ENCODE measurements at regions of chr3 and their contacts with region 1.

Region 1: GRCh38 chr3:157159762-157160657 is at the start of gene CCNL1:
- DNase-seq: peak; percentile 93 to 100 (median 96)
- ATAC-seq: peak; percentile 67
- H3K4me3 ChIP-seq: peak within 1 kb of the TSS; percentile 95
- H3K4me3 Mint-ChIP-seq: peak within 1 kb of the TSS; percentile 95
- H3K27ac ChIP-seq: peak within 1 kb of the TSS; percentile 99 to 100
- H3K27ac Mint-ChIP-seq: peak within 1 kb of the TSS; percentile 100
- H3K4me1 ChIP-seq: peaks cover 22% of the 10 kb centered on the region
- H3K4me1 Mint-ChIP-seq: peaks cover 67% of the 10 kb centered on the region
- H3K27me3 ChIP-seq: no peaks in the 10 kb centered on the region
- H3K27me3 Mint-ChIP-seq: no peaks in the 10 kb centered on the region
- CTCF ChIP-seq: no peak
- total RNA-seq, gene CCNL1: 1,350 to 1,388 TPM

Region 2: GRCh38 chr3:155870133-155870944 is 1289.7 kb before region 1 on chr3 and contains the start of gene GMPS:
- CTCF ChIA-PET with region 1: no interaction called
- POLR2A ChIA-PET with region 1: interaction called, 12 read pairs
- intact Hi-C with region 1: no loop called
- DNase-seq: peak; percentile 87 to 98 (median 95)
- ATAC-seq: peak; percentile 91
- H3K4me3 ChIP-seq: peak within 1 kb of the TSS; percentile 69
- H3K4me3 Mint-ChIP-seq: peak within 1 kb of the TSS; percentile 97
- H3K27ac ChIP-seq: peak within 1 kb of the TSS; percentile 79 to 86
- H3K27ac Mint-ChIP-seq: peak within 1 kb of the TSS; percentile 95
- H3K4me1 ChIP-seq: peaks cover 23% of the 10 kb centered on the region
- H3K4me1 Mint-ChIP-seq: peaks cover 32% of the 10 kb centered on the region
- H3K27me3 ChIP-seq: no peaks in the 10 kb centered on the region
- H3K27me3 Mint-ChIP-seq: no peaks in the 10 kb centered on the region
- CTCF ChIP-seq: peak; percentile 47
- total RNA-seq, gene GMPS: 34.1 to 34.3 TPM

Region 3: DNA sequence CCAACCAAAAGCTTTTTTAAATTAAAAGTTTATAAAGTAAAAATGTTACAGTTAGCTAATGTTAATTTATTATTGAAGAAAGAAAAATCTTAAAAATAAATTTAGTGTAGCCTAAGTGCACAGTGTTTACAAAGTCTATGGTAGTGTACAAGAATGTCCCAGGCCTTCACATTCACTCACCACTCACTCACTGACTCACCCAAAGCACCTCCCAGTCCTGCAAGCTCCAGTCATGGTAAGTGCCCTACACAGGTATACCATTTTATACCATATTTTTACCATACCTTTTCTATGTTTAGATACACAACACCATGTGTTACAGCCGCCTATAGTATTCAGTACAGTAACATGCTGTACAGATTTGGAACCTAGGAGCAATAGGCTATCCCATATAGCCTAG is 634.2 kb before region 1 on chr3:
- CTCF ChIA-PET with region 1: no interaction called
- POLR2A ChIA-PET with region 1: interaction called, 10 read pairs
- intact Hi-C with region 1: no loop called
- DNase-seq: no peak
- ATAC-seq: no peak
- H3K4me3 ChIP-seq: no peak overlapping the region
- H3K4me3 Mint-ChIP-seq: no peak overlapping the region
- H3K27ac ChIP-seq: no peak overlapping the region
- H3K27ac Mint-ChIP-seq: no peak overlapping the region
- H3K4me1 ChIP-seq: peaks cover 11% of the 10 kb centered on the region
- H3K4me1 Mint-ChIP-seq: peaks cover 13% of the 10 kb centered on the region
- H3K27me3 ChIP-seq: no peaks in the 10 kb centered on the region
- H3K27me3 Mint-ChIP-seq: peaks cover 41% of the 10 kb centered on the region
- CTCF ChIP-seq: no peak

Region 4: DNA sequence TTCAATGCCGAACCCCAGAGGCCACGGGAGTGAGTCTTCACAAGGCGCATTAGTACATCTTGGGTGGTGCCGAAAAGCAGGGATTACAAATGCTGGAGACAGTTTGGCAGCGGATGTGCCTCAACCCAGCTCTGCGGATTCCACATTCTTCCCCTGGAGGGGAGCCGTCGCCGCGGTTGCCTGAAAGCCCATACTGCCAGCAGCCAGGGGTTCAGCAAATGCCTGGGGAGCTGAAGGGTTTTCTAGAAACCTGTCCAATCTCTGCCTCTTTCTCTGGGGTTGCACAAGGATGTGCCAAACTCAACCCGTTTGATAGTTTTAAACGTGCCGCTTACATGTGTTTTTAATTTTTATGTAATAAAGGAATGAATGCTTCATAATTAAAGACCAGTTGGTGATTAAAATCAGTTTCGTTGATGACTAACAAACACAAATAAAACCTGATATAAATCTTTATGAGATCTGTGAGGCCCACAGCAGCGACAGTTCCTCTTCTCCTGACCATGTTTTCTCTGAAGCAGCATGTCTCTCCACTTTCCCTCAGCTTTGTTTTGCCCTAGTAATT is 408.5 kb before region 1 on chr3:
- CTCF ChIA-PET with region 1: no interaction called
- POLR2A ChIA-PET with region 1: no interaction called
- intact Hi-C with region 1: no loop called
- DNase-seq: no peak
- ATAC-seq: no peak
- H3K4me3 ChIP-seq: no peak overlapping the region
- H3K4me3 Mint-ChIP-seq: no peak overlapping the region
- H3K27ac ChIP-seq: no peak overlapping the region
- H3K27ac Mint-ChIP-seq: no peak overlapping the region
- H3K4me1 ChIP-seq: no peaks in the 10 kb centered on the region
- H3K4me1 Mint-ChIP-seq: no peaks in the 10 kb centered on the region
- H3K27me3 ChIP-seq: no peaks in the 10 kb centered on the region
- H3K27me3 Mint-ChIP-seq: peaks cover 22% of the 10 kb centered on the region
- CTCF ChIP-seq: no peak

Region 5: DNA sequence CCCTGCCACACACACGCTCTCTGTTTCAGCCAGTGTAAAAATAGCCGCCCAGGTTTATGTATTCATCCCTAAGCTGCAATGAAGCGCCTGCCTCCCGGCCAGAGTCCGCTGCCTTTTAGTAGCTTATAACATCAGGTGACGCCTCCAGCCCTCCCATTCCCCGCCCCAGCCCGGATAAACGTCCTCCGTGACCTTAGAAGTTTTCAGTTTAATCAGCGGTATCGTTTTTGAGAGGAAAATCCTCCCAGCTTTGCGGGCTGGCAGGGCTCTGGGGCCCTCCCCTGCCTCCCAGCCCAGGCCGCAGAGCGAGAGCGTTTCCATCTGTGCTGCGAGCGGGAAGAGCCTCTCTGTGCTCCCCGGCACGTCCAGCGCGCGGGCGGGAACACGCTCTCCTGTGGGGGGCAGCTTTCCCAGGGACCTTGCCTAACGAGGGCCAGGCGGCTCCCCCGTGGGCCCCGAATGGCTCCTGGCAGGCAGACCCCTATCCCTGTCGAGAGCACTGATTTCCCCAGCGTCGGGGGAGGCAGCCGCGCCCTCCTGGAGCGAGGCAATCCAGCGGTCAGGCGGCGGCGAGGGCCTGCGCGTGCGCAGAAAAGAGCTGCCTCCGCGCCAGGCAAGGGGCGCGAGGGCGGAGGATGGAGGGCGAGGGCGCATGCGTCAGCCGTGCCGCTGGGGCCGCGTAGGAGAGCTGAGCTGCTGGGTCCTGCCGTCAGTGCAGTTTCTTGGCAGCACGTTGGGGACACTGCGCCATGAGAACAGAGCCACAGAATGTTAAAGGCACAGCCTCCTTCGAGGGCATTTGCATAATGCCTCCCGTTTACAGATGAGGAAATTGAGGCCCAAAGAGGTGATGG is 71.2 kb before region 1 on chr3:
- CTCF ChIA-PET with region 1: no interaction called
- POLR2A ChIA-PET with region 1: interaction called, 46 read pairs
- intact Hi-C with region 1: no loop called
- DNase-seq: peak; percentile 88 to 97 (median 92)
- ATAC-seq: peak; percentile 83
- H3K4me3 ChIP-seq: peak overlapping the region; percentile 71
- H3K4me3 Mint-ChIP-seq: peak overlapping the region; percentile 90
- H3K27ac ChIP-seq: peak overlapping the region; percentile 92 to 93
- H3K27ac Mint-ChIP-seq: peak overlapping the region; percentile 99
- H3K4me1 ChIP-seq: peaks cover 31% of the 10 kb centered on the region
- H3K4me1 Mint-ChIP-seq: peaks cover 20% of the 10 kb centered on the region
- H3K27me3 ChIP-seq: no peaks in the 10 kb centered on the region
- H3K27me3 Mint-ChIP-seq: no peaks in the 10 kb centered on the region
- CTCF ChIP-seq: peak; percentile 14

Region 6: GRCh38 chr3:157136647-157137387 is 23.2 kb before region 1 on chr3:
- CTCF ChIA-PET with region 1: interaction called, 10 read pairs
- POLR2A ChIA-PET with region 1: interaction called, 11 read pairs
- intact Hi-C with region 1: no loop called
- DNase-seq: no peak
- ATAC-seq: peak; percentile 27
- H3K4me3 ChIP-seq: no peak overlapping the region
- H3K4me3 Mint-ChIP-seq: no peak overlapping the region
- H3K27ac ChIP-seq: no peak overlapping the region
- H3K27ac Mint-ChIP-seq: peak overlapping the region; percentile 74
- H3K4me1 ChIP-seq: peaks cover 47% of the 10 kb centered on the region
- H3K4me1 Mint-ChIP-seq: peaks cover 29% of the 10 kb centered on the region
- H3K27me3 ChIP-seq: no peaks in the 10 kb centered on the region
- H3K27me3 Mint-ChIP-seq: no peaks in the 10 kb centered on the region
- CTCF ChIP-seq: no peak

Region 7: DNA sequence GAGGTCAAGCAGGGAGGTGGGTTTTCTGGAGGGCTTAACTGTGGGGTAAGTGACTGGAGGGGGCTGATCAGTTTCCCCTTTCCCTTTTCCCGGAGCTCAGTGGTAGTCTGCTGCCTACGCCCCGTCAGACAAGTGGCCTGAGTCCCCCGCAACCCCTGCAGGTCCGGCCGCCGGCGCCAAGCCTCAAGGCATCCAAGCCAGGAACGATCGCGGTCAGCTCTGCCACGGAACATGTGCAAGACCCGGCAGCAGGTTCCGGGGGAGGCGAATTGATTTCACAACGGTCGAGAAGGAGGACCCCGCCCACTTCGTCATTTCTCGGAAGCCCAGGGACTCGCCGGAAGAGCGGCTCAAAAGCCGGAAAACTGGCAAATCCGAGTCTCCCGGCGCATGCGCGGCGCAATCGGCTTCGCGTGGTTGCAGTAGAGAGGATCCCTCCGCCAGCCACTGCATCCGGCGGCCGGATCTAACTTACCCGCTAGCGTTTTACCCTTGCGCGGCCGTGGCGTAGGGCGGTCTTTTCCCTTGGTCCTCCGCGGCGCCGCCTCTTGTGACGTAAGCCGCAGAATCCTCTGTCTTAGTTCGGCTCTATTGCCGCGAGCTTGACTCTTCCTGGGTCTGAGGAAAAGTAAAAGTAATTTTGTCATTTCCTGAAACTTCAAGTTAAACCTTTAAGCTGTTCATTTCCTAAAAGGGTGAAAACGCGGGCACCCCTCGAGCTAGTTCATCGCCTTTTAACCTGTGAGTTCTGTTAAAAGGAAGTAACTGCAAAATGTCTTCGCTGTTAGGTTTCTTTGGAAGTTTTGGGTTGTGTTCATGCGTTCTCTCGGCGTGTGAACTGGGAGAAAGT is 14.9 kb after region 1 on chr3:
- CTCF ChIA-PET with region 1: interaction called, 22 read pairs
- POLR2A ChIA-PET with region 1: interaction called, 778 read pairs
- intact Hi-C with region 1: loop called (anchors 1 kb)
- DNase-seq: peak; percentile 93 to 100 (median 98)
- ATAC-seq: peak; percentile 91
- H3K4me3 ChIP-seq: peak overlapping the region; percentile 65
- H3K4me3 Mint-ChIP-seq: peak overlapping the region; percentile 92
- H3K27ac ChIP-seq: peak overlapping the region; percentile 96 to 98
- H3K27ac Mint-ChIP-seq: peak overlapping the region; percentile 98
- H3K4me1 ChIP-seq: peaks cover 18% of the 10 kb centered on the region
- H3K4me1 Mint-ChIP-seq: peaks cover 31% of the 10 kb centered on the region
- H3K27me3 ChIP-seq: no peaks in the 10 kb centered on the region
- H3K27me3 Mint-ChIP-seq: no peaks in the 10 kb centered on the region
- CTCF ChIP-seq: no peak

Region 8: DNA sequence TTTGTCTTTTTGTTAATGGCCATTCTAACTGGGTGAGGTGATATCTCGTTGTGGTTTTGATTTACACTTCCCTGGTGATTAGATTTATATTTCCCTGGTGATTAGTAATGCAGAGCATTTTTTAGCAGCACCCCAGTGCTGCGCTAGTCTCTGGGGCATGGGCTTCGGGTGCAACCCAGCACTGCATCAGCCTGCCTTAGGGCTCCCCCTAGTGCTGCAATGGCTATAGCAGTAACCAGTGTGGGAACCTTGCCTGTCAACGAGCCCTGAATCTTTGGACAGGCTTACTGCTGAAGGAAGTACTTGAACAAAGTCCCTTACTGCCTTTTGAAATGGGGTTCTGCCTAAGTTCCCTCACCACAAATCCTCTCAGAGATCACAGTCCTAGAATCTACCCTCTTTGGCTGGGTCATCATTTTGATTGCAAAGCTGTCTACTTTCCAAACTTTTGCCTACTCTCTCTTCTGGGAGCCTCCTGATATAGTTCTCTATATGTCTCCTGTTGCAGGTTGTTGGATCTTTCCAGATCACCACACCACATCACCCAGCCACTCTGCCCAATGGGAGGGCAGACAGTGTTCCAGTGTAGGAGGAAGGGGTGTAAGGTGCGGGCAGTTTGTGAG is 79.2 kb after region 1 on chr3:
- CTCF ChIA-PET with region 1: no interaction called
- POLR2A ChIA-PET with region 1: no interaction called
- intact Hi-C with region 1: loop called (anchors 1 to 5 kb)
- DNase-seq: peak; percentile 54 to 82 (median 61)
- ATAC-seq: peak; percentile 99
- H3K4me3 ChIP-seq: no peak overlapping the region
- H3K4me3 Mint-ChIP-seq: no peak overlapping the region
- H3K27ac ChIP-seq: no peak overlapping the region
- H3K27ac Mint-ChIP-seq: no peak overlapping the region
- H3K4me1 ChIP-seq: no peaks in the 10 kb centered on the region
- H3K4me1 Mint-ChIP-seq: no peaks in the 10 kb centered on the region
- H3K27me3 ChIP-seq: no peaks in the 10 kb centered on the region
- H3K27me3 Mint-ChIP-seq: no peaks in the 10 kb centered on the region
- CTCF ChIP-seq: peak; percentile 85